Calu3 (cell line): ENCODE measurements at regions of chr15 and their contacts with region 1.

Region 1: GRCh38 chr15:50424066-50424890 is at the start of gene USP8:
- DNase-seq: peak; percentile 98
- H3K4me3 Mint-ChIP-seq: peak within 1 kb of the TSS; percentile 87
- H3K27ac Mint-ChIP-seq: peak within 1 kb of the TSS; percentile 91
- H3K4me1 Mint-ChIP-seq: no peaks in the 10 kb centered on the region
- H3K27me3 Mint-ChIP-seq: no peaks in the 10 kb centered on the region
- CTCF ChIP-seq: no peak
- total RNA-seq, gene USP8: 72.4 and 73.2 TPM in 2 replicates

Region 2: GRCh38 chr15:49901996-49902684 is 522.1 kb before region 1 on chr15:
- CTCF ChIA-PET with region 1: no interaction called
- intact Hi-C with region 1: no loop called
- DNase-seq: no peak
- H3K4me3 Mint-ChIP-seq: no peak overlapping the region
- H3K27ac Mint-ChIP-seq: no peak overlapping the region
- H3K4me1 Mint-ChIP-seq: no peaks in the 10 kb centered on the region
- H3K27me3 Mint-ChIP-seq: peaks cover 5% of the 10 kb centered on the region
- CTCF ChIP-seq: no peak

Region 3: DNA sequence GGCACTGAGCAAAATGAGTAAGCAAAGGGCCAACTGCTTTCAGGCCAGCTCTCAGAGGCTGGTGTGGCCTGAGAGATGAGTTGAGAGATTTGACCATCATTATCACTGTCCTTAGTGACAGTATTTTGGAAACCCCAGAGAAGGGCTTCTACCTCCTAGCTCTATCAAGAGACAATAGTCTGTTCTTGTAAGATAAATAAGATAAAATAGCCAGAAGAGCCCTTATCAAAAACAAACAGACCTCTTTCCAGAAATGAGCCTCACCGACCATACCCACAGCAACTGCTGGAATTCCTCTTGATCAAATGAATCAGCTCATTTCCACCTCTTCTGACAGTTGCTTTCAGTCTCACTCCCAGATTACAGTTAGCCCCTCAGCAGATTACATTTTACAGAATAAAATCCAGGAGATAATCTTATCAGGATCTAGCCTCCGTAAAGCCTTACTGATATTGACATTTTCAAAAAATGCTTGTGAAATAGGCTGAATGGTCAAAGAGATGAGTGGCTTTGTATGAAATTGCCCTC is 163.2 kb before region 1 on chr15:
- CTCF ChIA-PET with region 1: no interaction called
- intact Hi-C with region 1: no loop called
- DNase-seq: no peak
- H3K4me3 Mint-ChIP-seq: no peak overlapping the region
- H3K27ac Mint-ChIP-seq: no peak overlapping the region
- H3K4me1 Mint-ChIP-seq: peaks cover 18% of the 10 kb centered on the region
- H3K27me3 Mint-ChIP-seq: peaks cover 33% of the 10 kb centered on the region
- CTCF ChIP-seq: no peak

Region 4: GRCh38 chr15:50354838-50355618 is 69.2 kb before region 1 on chr15 and contains the start of gene GABPB1:
- CTCF ChIA-PET with region 1: no interaction called
- intact Hi-C with region 1: loop called (anchors 1 kb)
- DNase-seq: peak; percentile 93
- H3K4me3 Mint-ChIP-seq: peak within 1 kb of the TSS; percentile 71
- H3K27ac Mint-ChIP-seq: peak within 1 kb of the TSS; percentile 64
- H3K4me1 Mint-ChIP-seq: peaks cover 41% of the 10 kb centered on the region
- H3K27me3 Mint-ChIP-seq: no peaks in the 10 kb centered on the region
- CTCF ChIP-seq: no peak
- total RNA-seq, gene GABPB1: 25.6 and 33.0 TPM in 2 replicates